ENCODE measurements at regions of chr12 and their contacts with region 1.

Region 1: GRCh38 chr12:121590476-121591143 is 9.8 kb upstream of the KDM2B start:
- DNase-seq: peak; percentile 80
- H3K4me3 Mint-ChIP-seq: peak overlapping the region; percentile 82
- H3K27ac Mint-ChIP-seq: peak overlapping the region; percentile 98
- H3K4me1 Mint-ChIP-seq: peaks cover 26% of the 10 kb centered on the region
- H3K27me3 Mint-ChIP-seq: no peaks in the 10 kb centered on the region

Region 2: GRCh38 chr12:121260091-121260490 is 330.5 kb before region 1 on chr12:
- CTCF ChIA-PET with region 1: no interaction called
- POLR2A ChIA-PET with region 1: no interaction called
- intact Hi-C with region 1: no loop called
- DNase-seq: no peak
- H3K4me3 Mint-ChIP-seq: no peak overlapping the region
- H3K27ac Mint-ChIP-seq: no peak overlapping the region
- H3K4me1 Mint-ChIP-seq: no peaks in the 10 kb centered on the region
- H3K27me3 Mint-ChIP-seq: no peaks in the 10 kb centered on the region

Region 3: GRCh38 chr12:121579981-121580868 is 10.4 kb before region 1 on chr12:
- CTCF ChIA-PET with region 1: interaction called, 4 read pairs
- POLR2A ChIA-PET with region 1: interaction called, 7 read pairs
- intact Hi-C with region 1: loop called (anchors 1 kb)
- DNase-seq: peak; percentile 85
- H3K4me3 Mint-ChIP-seq: peak overlapping the region; percentile 86
- H3K27ac Mint-ChIP-seq: peak overlapping the region; percentile 92
- H3K4me1 Mint-ChIP-seq: peaks cover 33% of the 10 kb centered on the region
- H3K27me3 Mint-ChIP-seq: no peaks in the 10 kb centered on the region